Natural killer cell (primary cell): ENCODE measurements at regions of chr2 and their contacts with region 1.

Region 1: GRCh38 chr2:25833566-25833965 is 44.7 kb downstream of the ASXL2 start:
- DNase-seq: no peak
- ATAC-seq: no peak
- H3K4me3 ChIP-seq: no peak overlapping the region
- H3K4me3 Mint-ChIP-seq: no peak overlapping the region
- H3K27ac ChIP-seq: no peak overlapping the region
- H3K27ac Mint-ChIP-seq: peak overlapping the region in 1 of 2 donors; percentile 93
- H3K4me1 ChIP-seq: peaks cover 13% of the 10 kb centered on the region
- H3K4me1 Mint-ChIP-seq: peaks cover 48 to 51% of the 10 kb centered on the region in 2 donors
- H3K27me3 ChIP-seq: no peaks in the 10 kb centered on the region
- H3K27me3 Mint-ChIP-seq: no peaks in the 10 kb centered on the region
- CTCF ChIP-seq: no peak

Region 2: DNA sequence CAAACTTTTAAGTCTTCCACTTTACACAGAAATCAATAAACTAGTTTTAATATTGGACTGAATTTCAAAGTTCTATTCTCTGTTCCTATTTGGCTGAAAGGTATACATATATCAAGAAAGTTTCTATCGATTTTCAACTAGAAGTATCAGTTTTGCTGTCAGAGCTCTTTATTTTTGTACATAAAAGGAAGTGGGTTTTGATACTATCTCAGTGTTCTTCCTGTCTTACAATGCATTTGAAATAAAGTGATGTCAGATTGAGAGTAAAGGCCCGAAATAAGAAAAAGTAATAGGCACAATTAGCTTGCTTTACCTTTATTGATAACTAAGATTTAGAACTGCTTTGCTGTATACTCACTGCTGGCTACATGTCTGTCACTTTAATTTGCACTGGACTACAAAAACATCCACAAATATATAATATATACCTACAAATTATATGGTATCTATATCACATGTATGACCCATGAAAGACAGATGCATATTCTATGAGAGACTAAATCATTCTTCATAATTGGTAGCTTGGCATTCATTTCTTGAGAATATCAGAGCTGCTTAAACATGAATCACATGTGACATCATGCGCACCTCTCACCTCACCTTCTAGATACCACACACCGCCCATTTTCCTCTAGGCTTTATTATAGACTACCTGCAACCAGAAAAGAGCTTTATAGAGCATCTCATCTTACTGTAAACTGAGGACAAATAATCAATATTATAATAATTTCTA is 38.9 kb before region 1 on chr2:
- intact Hi-C with region 1: loop called (anchors 5 kb)
- DNase-seq: peak in 1 of 2 donors; percentile 65
- ATAC-seq: peak; percentile 71 to 83 (median 80)
- H3K4me3 ChIP-seq: peak overlapping the region; percentile 19
- H3K4me3 Mint-ChIP-seq: peak overlapping the region; percentile 92
- H3K27ac ChIP-seq: peak overlapping the region; percentile 85
- H3K27ac Mint-ChIP-seq: peak overlapping the region; percentile 92 to 93
- H3K4me1 ChIP-seq: peaks cover 21% of the 10 kb centered on the region
- H3K4me1 Mint-ChIP-seq: peaks cover 64 to 66% of the 10 kb centered on the region in 2 donors
- H3K27me3 ChIP-seq: no peaks in the 10 kb centered on the region
- H3K27me3 Mint-ChIP-seq: no peaks in the 10 kb centered on the region
- CTCF ChIP-seq: no peak